ENCODE measurements at regions of chr13 and their contacts with region 1.

Region 1: GRCh38 chr13:26186118-26186870 is 35.8 kb downstream of the RNF6 start:
- DNase-seq: peak; percentile 49
- H3K4me3 ChIP-seq: peak overlapping the region; percentile 66
- CTCF ChIP-seq: peak; percentile 49

Region 2: DNA sequence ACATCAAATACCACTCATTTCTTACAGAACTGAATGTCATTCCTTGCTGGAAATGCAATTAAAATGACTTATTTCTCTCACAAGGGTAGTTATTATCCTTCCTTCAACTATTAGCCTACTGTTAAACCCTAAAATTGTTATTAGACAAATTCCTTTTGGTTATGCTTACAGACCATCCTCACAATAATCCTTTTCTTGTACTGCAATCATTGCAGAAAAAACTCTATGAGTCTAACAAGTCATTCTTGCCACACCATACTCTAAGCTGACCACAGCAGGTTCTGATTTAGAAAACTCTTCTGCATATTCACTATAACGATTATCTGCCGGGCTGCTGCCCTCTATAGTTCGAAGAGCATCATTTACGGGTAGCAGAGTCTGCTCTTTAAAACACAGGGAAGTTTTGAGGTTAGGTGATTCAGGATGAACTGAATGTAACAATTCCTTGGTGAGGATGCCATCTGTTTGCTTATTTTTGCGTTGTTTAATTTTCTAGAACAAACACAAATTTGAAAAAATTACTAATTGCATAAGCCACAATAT is 937.2 kb before region 1 on chr13:
- CTCF ChIA-PET with region 1: no interaction called
- POLR2A ChIA-PET with region 1: no interaction called
- DNase-seq: no peak
- H3K4me3 ChIP-seq: no peak overlapping the region
- CTCF ChIP-seq: peak; percentile 44

Region 3: DNA sequence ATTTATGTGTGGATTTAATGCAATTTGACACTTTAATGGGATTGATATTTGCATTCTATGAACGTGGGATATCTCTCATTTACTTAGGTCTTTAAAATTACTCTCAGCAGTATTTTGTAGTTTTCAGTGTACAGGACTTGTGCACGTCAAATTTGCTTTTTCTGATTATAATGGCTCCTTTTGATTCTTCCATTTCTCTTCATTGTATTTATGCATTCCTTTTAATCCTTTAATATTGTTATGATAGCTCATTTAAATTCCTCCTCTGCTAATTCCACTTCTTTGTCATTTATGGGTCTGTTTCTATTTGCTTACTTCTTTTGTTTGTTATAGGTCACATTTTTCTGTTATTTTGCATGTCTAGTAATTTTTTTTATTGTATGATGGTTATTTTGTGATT is 587.9 kb before region 1 on chr13:
- CTCF ChIA-PET with region 1: no interaction called
- POLR2A ChIA-PET with region 1: no interaction called
- DNase-seq: no peak
- H3K4me3 ChIP-seq: no peak overlapping the region
- CTCF ChIP-seq: no peak

Region 4: GRCh38 chr13:26062844-26063444 is 123.3 kb before region 1 on chr13:
- CTCF ChIA-PET with region 1: no interaction called
- POLR2A ChIA-PET with region 1: no interaction called
- DNase-seq: no peak
- H3K4me3 ChIP-seq: no peak overlapping the region
- CTCF ChIP-seq: peak; percentile 68

Region 5: GRCh38 chr13:26168237-26168820 is 18.0 kb before region 1 on chr13:
- CTCF ChIA-PET with region 1: interaction called, 25 read pairs
- POLR2A ChIA-PET with region 1: no interaction called
- DNase-seq: peak; percentile 63
- H3K4me3 ChIP-seq: no peak overlapping the region
- CTCF ChIP-seq: no peak

Region 6: GRCh38 chr13:26476111-26476781 is 290.0 kb after region 1 on chr13:
- CTCF ChIA-PET with region 1: interaction called, 62 read pairs
- POLR2A ChIA-PET with region 1: interaction called, 3 read pairs
- DNase-seq: no peak
- H3K4me3 ChIP-seq: peak overlapping the region; percentile 23
- CTCF ChIP-seq: no peak

Region 7: DNA sequence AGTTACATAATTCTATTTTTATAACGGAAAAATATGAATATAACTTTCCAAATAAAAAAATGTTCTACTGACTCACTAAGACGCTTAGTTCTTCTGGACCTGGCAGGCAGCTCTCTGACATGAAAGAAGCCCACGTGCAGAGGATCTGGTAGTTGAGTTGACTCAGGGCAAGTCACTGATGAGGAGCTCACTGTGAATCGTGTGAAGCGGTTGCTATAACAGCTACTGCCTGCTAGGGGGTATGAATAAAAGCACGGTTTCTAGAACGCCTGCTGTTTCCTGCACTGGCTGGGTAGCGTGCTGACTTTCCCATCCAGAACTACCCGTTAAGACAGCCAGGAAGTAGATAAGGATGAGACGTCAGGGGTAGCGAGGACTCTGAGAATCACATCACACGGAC is 316.5 kb after region 1 on chr13:
- CTCF ChIA-PET with region 1: interaction called, 205 read pairs
- POLR2A ChIA-PET with region 1: no interaction called
- DNase-seq: no peak
- H3K4me3 ChIP-seq: no peak overlapping the region
- CTCF ChIP-seq: no peak

Region 8: GRCh38 chr13:26688286-26688685 is 502.0 kb after region 1 on chr13:
- CTCF ChIA-PET with region 1: interaction called, 14 read pairs
- POLR2A ChIA-PET with region 1: no interaction called
- DNase-seq: no peak
- H3K4me3 ChIP-seq: no peak overlapping the region
- CTCF ChIP-seq: no peak

Region 9: DNA sequence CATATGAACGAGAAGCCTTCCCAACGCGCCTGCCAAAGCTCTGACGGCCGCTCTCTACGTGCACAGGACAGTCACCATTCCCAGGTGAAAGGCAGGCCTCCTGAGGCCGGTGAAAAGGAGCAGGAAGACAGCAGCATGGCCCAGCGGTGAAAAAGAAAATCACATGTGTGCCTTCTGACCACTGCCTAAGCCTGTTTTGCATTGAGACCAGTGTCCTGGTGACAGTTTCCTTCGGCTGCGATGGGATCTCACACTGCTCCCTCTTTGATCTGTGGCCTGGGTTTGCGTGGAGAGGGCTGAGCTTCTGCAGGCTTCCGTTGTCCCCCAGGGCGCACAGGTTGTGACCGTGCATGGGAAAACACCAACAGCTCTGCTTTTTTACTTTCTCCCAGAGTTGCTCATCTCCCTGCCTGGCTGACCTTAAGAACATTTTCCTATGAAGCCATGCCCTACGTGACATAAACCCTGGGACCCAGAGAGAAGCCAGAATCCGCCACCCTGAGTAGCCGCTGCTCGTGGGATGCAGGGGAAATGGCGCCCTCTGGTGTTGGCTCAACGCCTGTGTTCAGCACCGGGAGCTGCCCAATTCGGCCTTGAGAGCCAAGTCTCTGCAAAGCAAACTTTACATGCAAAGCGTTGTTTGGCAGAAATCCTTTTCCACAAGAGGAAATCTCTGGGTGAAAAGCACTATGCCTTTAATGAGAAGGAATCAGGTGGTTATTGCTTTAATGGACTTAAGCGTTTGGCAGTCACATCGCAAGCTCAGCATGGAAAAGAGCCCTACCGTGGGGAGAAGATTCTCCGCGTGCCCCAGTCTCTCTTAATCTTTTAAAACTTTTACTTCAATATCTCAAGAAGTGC is 686.5 kb after region 1 on chr13:
- CTCF ChIA-PET with region 1: interaction called, 18 read pairs
- POLR2A ChIA-PET with region 1: no interaction called
- DNase-seq: no peak
- H3K4me3 ChIP-seq: no peak overlapping the region
- CTCF ChIP-seq: peak; percentile 83

Region 10: GRCh38 chr13:27086599-27087265 is 900.4 kb after region 1 on chr13:
- CTCF ChIA-PET with region 1: no interaction called
- POLR2A ChIA-PET with region 1: no interaction called
- DNase-seq: no peak
- H3K4me3 ChIP-seq: no peak overlapping the region
- CTCF ChIP-seq: no peak